Naive thymus-derived CD8-positive, alpha-beta T cell (primary cell): ENCODE measurements at regions of chr4 and their contacts with region 1.

Region 1: DNA sequence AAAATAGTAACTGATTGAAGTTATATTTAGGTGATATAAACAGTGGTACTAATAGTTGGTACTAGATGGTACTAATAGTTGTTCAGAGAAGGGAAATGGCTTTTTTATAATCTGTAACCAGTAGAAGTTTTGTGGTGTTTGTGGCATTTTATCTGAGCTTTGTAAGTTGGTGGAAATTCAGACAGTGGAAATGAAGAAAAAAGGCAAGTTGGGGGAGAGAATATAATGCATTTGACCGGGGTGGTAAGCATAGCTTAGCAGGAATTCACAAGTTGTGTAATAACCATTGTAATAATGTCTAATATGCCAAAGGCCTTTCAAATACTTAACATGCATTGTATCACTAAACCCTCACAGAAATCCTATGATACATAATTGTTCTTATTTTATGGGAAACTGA is 36.3 kb downstream of the DTHD1 start:
- DNase-seq: no peak
- ATAC-seq: no peak
- H3K4me3 Mint-ChIP-seq: no peak overlapping the region
- H3K27ac Mint-ChIP-seq: peak overlapping the region in 1 of 10 donors; percentile 2
- H3K4me1 Mint-ChIP-seq: peaks cover 9 to 62% (median 13%) of the 10 kb centered on the region in 4 donors
- H3K27me3 Mint-ChIP-seq: no peaks in the 10 kb centered on the region

Region 2: GRCh38 chr4:36278789-36279188 is 38.9 kb before region 1 on chr4:
- POLR2A ChIA-PET with region 1: no interaction called
- DNase-seq: no peak
- ATAC-seq: no peak
- H3K4me3 Mint-ChIP-seq: no peak overlapping the region
- H3K27ac Mint-ChIP-seq: peak overlapping the region in 1 of 10 donors; percentile 23
- H3K4me1 Mint-ChIP-seq: peaks cover 0 to 27% (median 7%) of the 10 kb centered on the region in 4 donors
- H3K27me3 Mint-ChIP-seq: peaks cover 0 to 3% (median 0%) of the 10 kb centered on the region in 5 donors

Region 3: GRCh38 chr4:36549252-36549651 is 231.5 kb after region 1 on chr4:
- POLR2A ChIA-PET with region 1: interaction called, 10 read pairs
- DNase-seq: no peak
- ATAC-seq: no peak
- H3K4me3 Mint-ChIP-seq: no peak overlapping the region
- H3K27ac Mint-ChIP-seq: no peak overlapping the region
- H3K4me1 Mint-ChIP-seq: peaks cover 0 to 2% (median 0%) of the 10 kb centered on the region in 4 donors
- H3K27me3 Mint-ChIP-seq: peaks cover 0 to 7% (median 0%) of the 10 kb centered on the region in 5 donors